GM10248 (cell line): ENCODE measurements at regions of chr3 and their contacts with region 1.

Region 1: DNA sequence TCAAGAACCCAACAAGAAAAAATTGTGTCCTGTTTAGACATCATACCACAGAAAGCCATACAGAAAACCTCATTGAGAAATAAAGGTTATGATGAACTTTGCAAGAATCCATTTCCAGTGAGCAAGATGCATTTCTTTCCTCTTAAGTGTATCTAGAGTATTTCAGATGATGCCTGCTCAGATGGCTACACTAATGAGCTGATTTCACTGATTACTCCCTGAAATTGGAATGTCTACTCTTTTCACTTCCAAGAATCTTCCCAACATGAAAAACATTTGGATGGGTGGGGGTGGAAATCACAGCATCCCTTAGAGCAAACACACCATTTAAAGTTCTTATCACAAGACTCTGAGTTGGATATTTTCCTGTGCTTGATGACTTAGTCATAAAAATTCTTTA is 41.4 kb upstream of the IL12A start:
- DNase-seq: no peak
- CTCF ChIP-seq: no peak

Region 2: GRCh38 chr3:159964166-159964973 is 17.1 kb after region 1 on chr3:
- CTCF ChIA-PET with region 1: interaction called, 14 read pairs
- POLR2A ChIA-PET with region 1: no interaction called
- DNase-seq: peak; percentile 73
- CTCF ChIP-seq: no peak